BJ (cell line): ENCODE measurements at regions of chr5 and their contacts with region 1.

Region 1: GRCh38 chr5:177454397-177455035 is 7.9 kb downstream of the PRR7 start:
- DNase-seq: no peak
- H3K4me3 ChIP-seq: peak overlapping the region; percentile 41
- H3K27me3 ChIP-seq: no peaks in the 10 kb centered on the region
- CTCF ChIP-seq: peak; percentile 62

Region 2: DNA sequence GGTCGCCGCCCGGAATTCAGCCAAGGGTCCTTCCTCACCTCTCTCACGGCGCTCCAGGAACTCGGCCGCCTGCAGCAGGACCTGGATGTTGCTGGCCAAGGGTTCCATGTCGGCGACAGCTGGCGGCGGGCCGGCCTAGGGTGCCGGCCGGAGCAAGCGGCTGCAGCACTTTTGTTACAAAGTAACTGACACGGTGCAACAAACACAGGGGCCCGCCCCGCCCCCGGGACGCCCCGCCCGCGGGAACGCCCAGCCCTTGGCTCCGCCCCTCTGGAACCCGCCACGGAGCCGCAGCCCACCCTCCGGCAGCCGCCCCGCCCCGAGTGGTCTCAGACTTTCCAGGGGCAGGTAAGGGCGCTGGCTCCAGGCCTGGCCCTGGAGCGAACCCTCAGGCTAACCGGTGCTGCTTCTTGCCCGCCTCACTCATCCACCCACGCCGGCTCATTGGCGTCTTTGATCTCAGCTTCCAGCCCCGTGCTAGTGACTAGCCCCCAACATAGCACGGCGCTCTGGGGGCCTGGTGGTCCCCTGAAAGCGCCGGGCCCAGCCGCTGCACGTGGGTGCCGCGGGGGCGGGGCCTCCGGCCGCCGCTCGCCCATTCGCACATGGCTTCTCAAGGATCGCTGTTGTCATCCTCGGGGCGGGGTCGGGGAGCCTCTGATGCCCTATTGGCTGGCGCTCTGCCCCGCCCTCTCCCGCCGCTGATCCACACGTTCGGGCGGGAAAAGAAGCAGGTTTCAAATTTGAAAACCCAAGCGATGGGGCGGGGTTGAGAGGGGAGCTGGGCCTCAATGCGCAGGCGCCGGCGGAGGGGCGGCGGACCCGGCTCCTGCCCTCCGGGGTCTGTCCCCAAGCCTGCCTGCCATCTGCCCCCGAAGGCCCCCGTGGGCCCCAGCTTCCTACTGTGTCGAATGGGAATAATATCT is 142.5 kb before region 1 on chr5 and contains the start of gene MXD3:
- CTCF ChIA-PET with region 1: interaction called, 38 read pairs
- POLR2A ChIA-PET with region 1: no interaction called
- DNase-seq: peak; percentile 62
- H3K4me3 ChIP-seq: peak within 1 kb of the TSS; percentile 66
- H3K27me3 ChIP-seq: no peaks in the 10 kb centered on the region
- CTCF ChIP-seq: no peak
- polyA plus RNA-seq, gene MXD3: 11.8 and 18.1 TPM in 2 replicates

Region 3: DNA sequence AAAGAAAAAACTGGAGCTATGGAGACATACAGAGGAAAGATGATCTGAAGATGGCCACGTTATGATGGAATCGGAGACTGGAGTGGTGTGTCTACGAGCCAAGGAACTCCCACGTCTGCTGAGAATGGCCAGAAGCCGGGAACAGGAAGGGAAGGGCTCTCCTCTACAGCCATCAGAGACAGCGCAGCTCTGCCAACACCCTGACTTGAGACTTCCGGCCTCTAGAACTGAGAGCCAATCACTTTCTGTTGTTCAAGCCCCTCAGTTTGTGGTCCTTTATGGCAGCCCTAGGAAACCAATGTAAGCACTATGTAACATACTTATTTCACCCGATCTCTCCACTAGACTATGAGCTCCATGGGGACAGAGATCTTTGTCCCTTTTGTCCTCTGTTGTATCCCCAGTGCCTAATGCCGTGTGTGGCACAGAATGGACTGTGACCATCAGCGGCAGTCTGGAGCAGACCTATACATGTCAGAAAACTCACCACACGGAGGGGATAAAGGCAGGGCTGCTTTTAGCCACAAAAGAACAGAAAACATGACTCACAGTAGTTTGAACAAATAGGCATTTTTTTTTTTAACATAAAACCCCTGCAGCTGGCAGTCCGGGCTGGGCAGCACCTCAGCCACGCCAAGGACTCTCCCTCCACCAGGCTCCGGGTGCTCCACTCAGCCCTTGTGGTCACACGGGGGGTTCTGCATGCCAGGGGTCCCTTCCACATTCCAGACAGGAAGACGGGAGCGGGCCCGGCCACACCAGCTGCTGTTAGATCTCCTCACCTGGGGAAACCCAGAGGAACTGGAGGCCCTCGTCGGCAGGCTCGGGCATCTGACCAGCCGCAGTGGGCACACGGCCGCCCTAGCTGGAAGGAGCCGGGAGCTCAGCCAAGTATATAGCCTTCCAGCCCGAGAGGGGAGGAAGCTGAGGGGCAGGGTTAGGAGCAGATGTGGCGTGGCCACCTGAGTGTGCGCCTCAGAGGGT is 126.7 kb before region 1 on chr5:
- CTCF ChIA-PET with region 1: interaction called, 11 read pairs
- POLR2A ChIA-PET with region 1: no interaction called
- DNase-seq: no peak
- H3K4me3 ChIP-seq: no peak overlapping the region
- H3K27me3 ChIP-seq: no peaks in the 10 kb centered on the region
- CTCF ChIP-seq: no peak

Region 4: GRCh38 chr5:177397875-177398390 is 56.6 kb before region 1 on chr5:
- CTCF ChIA-PET with region 1: interaction called, 352 read pairs
- POLR2A ChIA-PET with region 1: no interaction called
- DNase-seq: no peak
- H3K4me3 ChIP-seq: no peak overlapping the region
- H3K27me3 ChIP-seq: peaks cover 35% of the 10 kb centered on the region
- CTCF ChIP-seq: no peak

Region 5: GRCh38 chr5:177473461-177474001 is 19.0 kb after region 1 on chr5 and contains the start of gene DBN1:
- CTCF ChIA-PET with region 1: interaction called, 35 read pairs
- POLR2A ChIA-PET with region 1: no interaction called
- DNase-seq: no peak
- H3K4me3 ChIP-seq: peak within 1 kb of the TSS; percentile 54
- H3K27me3 ChIP-seq: no peaks in the 10 kb centered on the region
- CTCF ChIP-seq: no peak
- polyA plus RNA-seq, gene DBN1: 103 and 176 TPM in 2 replicates